ENCODE measurements at regions of chr6 and their contacts with region 1.

Region 1: GRCh38 chr6:29708432-29709179 is 14.6 kb upstream of the HLA-F start:
- DNase-seq: peak; percentile 44 to 96 (median 79)
- ATAC-seq: peak; percentile 91 to 95 (median 93)
- H3K4me3 ChIP-seq: peak overlapping the region; percentile 12 to 32
- H3K4me3 Mint-ChIP-seq: peak overlapping the region; percentile 69 to 82 (median 76)
- H3K27ac ChIP-seq: peak overlapping the region; percentile 65
- H3K27ac Mint-ChIP-seq: peak overlapping the region; percentile 89 to 96
- H3K4me1 ChIP-seq: peaks cover 33 to 65% of the 10 kb centered on the region in 2 experiments
- H3K4me1 Mint-ChIP-seq: peaks cover 75 to 85% (median 81%) of the 10 kb centered on the region in 3 donors
- H3K27me3 ChIP-seq: peaks cover 2 to 5% of the 10 kb centered on the region in 2 experiments
- H3K27me3 Mint-ChIP-seq: no peaks in the 10 kb centered on the region

Region 2: GRCh38 chr6:29112119-29112518 is 596.5 kb before region 1 on chr6:
- CTCF ChIA-PET with region 1: no interaction called
- POLR2A ChIA-PET with region 1: no interaction called
- DNase-seq: peak in 4 of 35 experiments; percentile 2 to 13 (median 2)
- ATAC-seq: no peak
- H3K4me3 ChIP-seq: no peak overlapping the region
- H3K4me3 Mint-ChIP-seq: no peak overlapping the region
- H3K27ac ChIP-seq: no peak overlapping the region
- H3K27ac Mint-ChIP-seq: no peak overlapping the region
- H3K4me1 ChIP-seq: no peaks in the 10 kb centered on the region
- H3K4me1 Mint-ChIP-seq: no peaks in the 10 kb centered on the region
- H3K27me3 ChIP-seq: no peaks in the 10 kb centered on the region
- H3K27me3 Mint-ChIP-seq: peaks cover 22 to 43% of the 10 kb centered on the region in 2 donors

Region 3: GRCh38 chr6:29723262-29723665 is 14.7 kb after region 1 on chr6 and contains the start of gene HLA-F:
- CTCF ChIA-PET with region 1: interaction called, 5 to 12 read pairs
- POLR2A ChIA-PET with region 1: interaction called, 7 read pairs
- DNase-seq: peak in 33 of 35 experiments; percentile 66 to 96 (median 81)
- ATAC-seq: peak; percentile 88 to 89 (median 88)
- H3K4me3 ChIP-seq: peak within 1 kb of the TSS; percentile 72 to 96
- H3K4me3 Mint-ChIP-seq: peak within 1 kb of the TSS; percentile 91 to 96 (median 94)
- H3K27ac ChIP-seq: peak within 1 kb of the TSS; percentile 97
- H3K27ac Mint-ChIP-seq: peak within 1 kb of the TSS; percentile 98 to 99
- H3K4me1 ChIP-seq: peaks cover 38 to 54% of the 10 kb centered on the region in 2 experiments
- H3K4me1 Mint-ChIP-seq: peaks cover 49 to 56% (median 54%) of the 10 kb centered on the region in 3 donors
- H3K27me3 ChIP-seq: no peaks in the 10 kb centered on the region
- H3K27me3 Mint-ChIP-seq: no peaks in the 10 kb centered on the region
- total RNA-seq, gene HLA-F: 600 to 951 (median 748) TPM

Region 4: GRCh38 chr6:29976588-29977424 is 268.2 kb after region 1 on chr6:
- CTCF ChIA-PET with region 1: no interaction called
- POLR2A ChIA-PET with region 1: no interaction called
- DNase-seq: peak in 33 of 35 experiments; percentile 14 to 73 (median 39)
- ATAC-seq: peak; percentile 81 to 89 (median 86)
- H3K4me3 ChIP-seq: peak overlapping the region; percentile 51 to 55
- H3K4me3 Mint-ChIP-seq: peak overlapping the region; percentile 83 to 91 (median 85)
- H3K27ac ChIP-seq: no peak overlapping the region
- H3K27ac Mint-ChIP-seq: peak overlapping the region in 1 of 2 donors; percentile 74
- H3K4me1 ChIP-seq: peaks cover 2 to 34% of the 10 kb centered on the region in 2 experiments
- H3K4me1 Mint-ChIP-seq: peaks cover 35 to 51% (median 36%) of the 10 kb centered on the region in 3 donors
- H3K27me3 ChIP-seq: peaks cover 0 to 46% of the 10 kb centered on the region in 2 experiments
- H3K27me3 Mint-ChIP-seq: peaks cover 37 to 64% of the 10 kb centered on the region in 2 donors